ENCODE measurements at regions of chr11 and their contacts with region 1.

Region 1: DNA sequence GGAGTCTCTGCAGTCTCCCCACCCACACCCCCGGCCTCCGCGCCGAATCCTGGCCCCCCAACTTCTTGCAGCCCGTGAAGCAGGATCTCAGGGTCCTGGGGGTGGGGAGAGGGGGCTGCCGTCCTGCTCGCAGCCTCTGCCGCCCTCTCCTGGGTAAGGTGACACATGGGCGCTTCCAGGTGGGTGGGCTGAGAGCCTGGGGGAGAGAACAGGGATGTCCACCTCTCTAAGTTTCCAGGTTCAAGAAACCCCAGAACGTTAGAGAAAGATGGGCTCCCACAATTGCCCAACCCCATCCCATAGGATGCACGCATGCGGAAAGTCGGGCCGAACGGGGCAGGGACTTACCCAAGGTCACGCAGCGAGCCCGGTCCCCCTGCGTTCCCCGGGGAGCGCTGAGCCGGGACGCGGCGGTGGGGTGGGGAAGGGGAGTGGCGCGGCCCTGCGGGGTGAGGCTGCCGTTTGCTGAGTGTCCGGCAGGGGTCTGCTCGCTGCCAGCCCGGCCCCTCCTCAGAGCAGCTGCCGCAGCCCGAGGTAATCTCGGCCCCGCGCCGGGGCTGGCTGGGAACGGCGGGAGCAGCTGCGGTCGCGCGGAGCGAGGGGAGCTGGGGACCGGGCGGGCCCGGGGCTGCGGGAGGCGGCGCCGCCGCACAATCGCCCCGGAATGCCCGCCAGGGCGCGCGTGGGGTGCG is 705 bp upstream of the CAPN1 start:
- DNase-seq: peak; percentile 48 to 70 (median 54)
- H3K4me3 ChIP-seq: peak overlapping the region; percentile 61 to 70
- H3K4me3 Mint-ChIP-seq: peak overlapping the region; percentile 89 to 93 (median 90)
- H3K27ac ChIP-seq: peak overlapping the region; percentile 52
- H3K27ac Mint-ChIP-seq: peak overlapping the region in 6 of 7 donors; percentile 79 to 94 (median 87)
- H3K4me1 ChIP-seq: peaks cover 36% of the 10 kb centered on the region
- H3K4me1 Mint-ChIP-seq: peaks cover 11 to 37% (median 22%) of the 10 kb centered on the region in 4 donors
- H3K27me3 ChIP-seq: no peaks in the 10 kb centered on the region
- H3K27me3 Mint-ChIP-seq: no peaks in the 10 kb centered on the region

Region 2: GRCh38 chr11:65261591-65262380 is 80.8 kb after region 1 on chr11 and contains the start of gene POLA2:
- CTCF ChIA-PET with region 1: no interaction called
- POLR2A ChIA-PET with region 1: no interaction called
- intact Hi-C with region 1: loop called (anchors 5 kb)
- DNase-seq: peak; percentile 95 to 98 (median 98)
- H3K4me3 ChIP-seq: peak within 1 kb of the TSS; percentile 67 to 99
- H3K4me3 Mint-ChIP-seq: peak within 1 kb of the TSS; percentile 92 to 97 (median 93)
- H3K27ac ChIP-seq: peak within 1 kb of the TSS; percentile 92
- H3K27ac Mint-ChIP-seq: peak within 1 kb of the TSS; percentile 94 to 97 (median 96)
- H3K4me1 ChIP-seq: peaks cover 23% of the 10 kb centered on the region
- H3K4me1 Mint-ChIP-seq: peaks cover 28 to 67% (median 36%) of the 10 kb centered on the region in 4 donors
- H3K27me3 ChIP-seq: no peaks in the 10 kb centered on the region
- H3K27me3 Mint-ChIP-seq: no peaks in the 10 kb centered on the region
- total RNA-seq, gene POLA2: 26.4 to 27.3 TPM

Measured in CD4-positive, alpha-beta memory T cell (primary cell).